SK-N-SH (cell line): ENCODE measurements at regions of chr1 and their contacts with region 1.

Region 1: GRCh38 chr1:156212833-156213643 is at the start of gene PMF1:
- DNase-seq: peak; percentile 98
- H3K4me3 ChIP-seq: peak within 1 kb of the TSS; percentile 67 to 70
- H3K27ac ChIP-seq: peak within 1 kb of the TSS; percentile 94 to 97
- H3K4me1 ChIP-seq: peaks cover 7 to 8% of the 10 kb centered on the region in 2 experiments; a peak in 2 of 4 replicates
- H3K27me3 ChIP-seq: no peaks in the 10 kb centered on the region
- CTCF ChIP-seq: no peak
- EP300 ChIP-seq: 0 out of 4 replicates have a peak, but pooled peaks of 1 of the 2 experiments have one; percentile 13
- RAD21 ChIP-seq: no peak
- polyA plus RNA-seq, gene PMF1: 72.5 and 89.5 TPM in 2 replicates

Region 2: DNA sequence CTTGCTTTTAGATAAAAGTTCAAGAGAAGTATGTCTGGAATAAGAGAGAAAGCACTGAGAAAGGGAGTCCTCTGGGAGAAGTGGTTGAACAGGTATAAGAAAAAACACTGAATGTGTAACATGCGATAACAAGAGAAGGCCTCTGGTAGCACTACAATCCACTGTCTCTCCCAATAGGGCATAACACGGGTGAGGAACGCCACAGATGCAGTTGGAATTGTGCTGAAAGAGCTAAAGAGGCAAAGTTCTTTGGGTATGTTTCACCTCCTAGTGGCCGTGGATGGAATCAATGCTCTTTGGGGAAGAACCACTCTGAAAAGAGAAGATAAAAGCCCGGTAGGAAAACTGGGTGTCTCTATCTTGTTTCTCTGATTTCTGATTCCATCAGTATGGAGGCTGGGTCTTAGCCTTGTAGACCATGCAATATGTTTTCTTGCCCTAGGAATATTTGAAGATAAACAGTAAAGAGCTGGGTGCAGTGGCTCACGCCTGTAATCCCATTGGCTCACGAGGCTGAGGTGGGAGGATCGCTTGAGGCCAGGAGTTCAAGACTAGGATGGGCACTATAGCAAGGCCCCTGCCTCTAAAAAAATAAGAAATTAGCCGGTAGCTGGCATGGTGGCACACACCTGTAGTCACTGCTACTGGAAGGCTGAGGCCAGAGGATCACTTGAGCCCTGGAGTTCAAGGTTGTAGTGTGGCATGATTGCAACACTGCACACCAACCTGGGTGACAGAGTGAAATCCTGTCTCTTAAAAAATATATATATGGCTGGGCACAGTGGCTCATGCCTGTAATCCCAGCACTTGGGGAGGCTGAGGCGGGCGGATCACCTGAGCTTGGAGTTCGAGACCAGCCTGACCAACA is 483.8 kb before region 1 on chr1:
- CTCF ChIA-PET with region 1: no interaction called
- POLR2A ChIA-PET with region 1: no interaction called
- DNase-seq: peak; percentile 55
- H3K4me3 ChIP-seq: no peak overlapping the region
- H3K27ac ChIP-seq: peak overlapping the region; percentile 31 to 38; a peak in 3 of 4 replicates
- H3K4me1 ChIP-seq: no peaks in the 10 kb centered on the region
- H3K27me3 ChIP-seq: no peaks in the 10 kb centered on the region
- CTCF ChIP-seq: peak; percentile 73
- EP300 ChIP-seq: no peak
- RAD21 ChIP-seq: peak; percentile 79

Region 3: GRCh38 chr1:156136970-156137483 is 76.0 kb before region 1 on chr1:
- CTCF ChIA-PET with region 1: interaction called, 14 read pairs
- POLR2A ChIA-PET with region 1: interaction called, 3 read pairs
- DNase-seq: no peak
- H3K4me3 ChIP-seq: no peak overlapping the region
- H3K27ac ChIP-seq: peak overlapping the region in 1 of 2 experiments; percentile 24; a peak in 1 of 4 replicates
- H3K4me1 ChIP-seq: no peaks in the 10 kb centered on the region
- H3K27me3 ChIP-seq: no peaks in the 10 kb centered on the region
- CTCF ChIP-seq: peak; percentile 39
- EP300 ChIP-seq: no peak
- RAD21 ChIP-seq: no peak

Region 4: GRCh38 chr1:156193488-156194299 is 19.3 kb before region 1 on chr1 and contains the start of gene SLC25A44:
- CTCF ChIA-PET with region 1: interaction called, 4 read pairs
- POLR2A ChIA-PET with region 1: interaction called, 16 read pairs
- DNase-seq: peak; percentile 92
- H3K4me3 ChIP-seq: peak within 1 kb of the TSS; percentile 69 to 78
- H3K27ac ChIP-seq: peak within 1 kb of the TSS; percentile 67 to 92
- H3K4me1 ChIP-seq: peaks cover 7 to 16% of the 10 kb centered on the region in 2 experiments; a peak in 2 of 4 replicates
- H3K27me3 ChIP-seq: no peaks in the 10 kb centered on the region
- CTCF ChIP-seq: peak; percentile 21; the same call in 1 of the 2 replicates
- EP300 ChIP-seq: no peak
- RAD21 ChIP-seq: no peak
- polyA plus RNA-seq, gene SLC25A44: 28.5 and 40.2 TPM in 2 replicates

Region 5: GRCh38 chr1:156251527-156251926 is 38.5 kb after region 1 on chr1:
- CTCF ChIA-PET with region 1: interaction called, 3 read pairs
- POLR2A ChIA-PET with region 1: interaction called, 17 read pairs
- DNase-seq: peak; percentile 85
- H3K4me3 ChIP-seq: no peak overlapping the region
- H3K27ac ChIP-seq: peak overlapping the region; percentile 16 to 99; a peak in 3 of 4 replicates
- H3K4me1 ChIP-seq: peaks cover 13 to 65% of the 10 kb centered on the region in 2 experiments; a peak in 3 of 4 replicates
- H3K27me3 ChIP-seq: no peaks in the 10 kb centered on the region
- CTCF ChIP-seq: no peak
- EP300 ChIP-seq: peak in 1 of 2 experiments; percentile 87; a peak in 2 of 4 replicates
- RAD21 ChIP-seq: no peak; the same call in 1 of the 2 replicates

Region 6: DNA sequence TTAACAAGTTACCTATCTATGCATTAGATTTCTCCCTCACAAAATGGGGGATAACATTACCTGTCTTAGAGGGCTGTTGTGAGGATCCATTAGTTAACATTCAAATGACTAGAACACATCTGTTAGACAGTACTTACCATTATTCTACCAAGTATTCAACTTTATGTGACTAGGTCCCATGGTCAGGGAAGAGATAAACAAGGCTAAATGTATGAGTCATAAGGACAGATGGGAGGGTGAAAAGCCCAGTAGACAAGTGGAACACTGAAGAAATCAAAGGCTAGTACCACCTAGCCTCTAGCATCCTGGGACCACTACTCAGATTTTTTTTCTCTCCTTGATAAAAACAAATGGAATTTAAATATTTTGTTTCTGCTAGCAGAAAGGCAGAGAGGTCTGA is 95.0 kb after region 1 on chr1:
- CTCF ChIA-PET with region 1: no interaction called
- POLR2A ChIA-PET with region 1: no interaction called
- DNase-seq: no peak
- H3K4me3 ChIP-seq: no peak overlapping the region
- H3K27ac ChIP-seq: 0 out of 4 replicates have a peak overlapping the region, but pooled peaks of 1 of the 2 experiments have one; percentile 3
- H3K4me1 ChIP-seq: no peaks in the 10 kb centered on the region
- H3K27me3 ChIP-seq: no peaks in the 10 kb centered on the region
- CTCF ChIP-seq: no peak
- EP300 ChIP-seq: no peak
- RAD21 ChIP-seq: no peak

Region 7: DNA sequence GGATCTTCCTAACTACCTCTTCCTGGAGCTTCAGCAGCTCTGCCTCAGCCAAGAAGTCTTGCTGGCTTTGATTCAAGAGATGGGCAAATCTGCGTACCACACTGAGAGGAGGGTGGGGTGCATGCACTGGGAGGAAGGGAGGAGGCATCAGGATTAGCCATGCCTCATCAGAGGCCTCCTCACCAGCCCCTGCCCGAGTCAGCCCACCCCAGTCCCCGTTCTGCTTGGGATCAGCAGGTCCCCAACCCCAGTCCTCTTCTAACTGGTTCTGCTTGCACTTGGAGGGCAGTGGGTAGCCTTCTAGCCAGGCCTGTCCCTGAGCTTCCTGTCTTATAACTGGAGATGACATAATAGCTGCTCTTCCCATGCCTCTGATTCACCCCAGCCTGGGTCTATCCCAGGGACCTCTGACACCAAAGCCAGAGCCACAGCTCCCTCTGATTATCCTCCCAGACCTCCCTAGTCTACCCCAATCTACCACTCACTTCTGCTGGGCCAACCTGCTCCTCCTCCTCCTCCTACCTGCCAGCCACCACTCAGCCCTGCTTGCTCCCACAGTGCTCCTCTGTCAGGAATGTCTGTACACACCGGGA is 327.8 kb after region 1 on chr1:
- CTCF ChIA-PET with region 1: no interaction called
- POLR2A ChIA-PET with region 1: no interaction called
- DNase-seq: no peak
- H3K4me3 ChIP-seq: no peak overlapping the region
- H3K27ac ChIP-seq: no peak overlapping the region
- H3K4me1 ChIP-seq: no peaks in the 10 kb centered on the region
- H3K27me3 ChIP-seq: no peaks in the 10 kb centered on the region
- CTCF ChIP-seq: no peak
- EP300 ChIP-seq: no peak
- RAD21 ChIP-seq: no peak

Region 8: DNA sequence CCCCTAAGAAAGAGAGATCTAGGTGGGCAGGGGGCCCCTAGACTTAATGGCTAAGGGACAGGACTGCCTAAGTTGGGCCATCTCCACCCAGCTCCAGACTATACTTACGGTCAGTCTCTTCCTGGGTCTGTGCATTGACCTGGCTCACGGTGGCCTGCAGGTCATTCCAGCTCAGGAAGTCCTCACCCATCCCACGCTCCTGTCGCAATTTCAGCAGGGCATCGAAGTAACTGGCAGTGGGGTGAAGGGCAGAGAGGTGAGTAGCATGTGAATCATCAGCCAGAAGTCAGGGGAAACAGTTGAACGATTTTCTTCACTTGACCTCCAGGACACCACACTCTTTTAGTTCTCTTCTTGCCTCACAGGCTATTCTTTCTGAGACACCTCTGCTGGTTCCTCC is 338.8 kb after region 1 on chr1:
- CTCF ChIA-PET with region 1: no interaction called
- POLR2A ChIA-PET with region 1: no interaction called
- DNase-seq: no peak
- H3K4me3 ChIP-seq: no peak overlapping the region
- H3K27ac ChIP-seq: no peak overlapping the region
- H3K4me1 ChIP-seq: no peaks in the 10 kb centered on the region
- H3K27me3 ChIP-seq: no peaks in the 10 kb centered on the region
- CTCF ChIP-seq: no peak
- EP300 ChIP-seq: no peak
- RAD21 ChIP-seq: no peak